Dorsolateral prefrontal cortex (tissue), 120 donors: ENCODE measurements at regions of chr10 and their contacts with region 1.

Region 1: GRCh38 chr10:23438550-23439441 is at the start of gene OTUD1:
- DNase-seq: peak; percentile 93 to 98 (median 95)
- H3K4me3 ChIP-seq: peak within 1 kb of the TSS; percentile 64 to 97 (median 83)
- H3K27ac ChIP-seq: peak within 1 kb of the TSS; percentile 77 to 99 (median 97)
- H3K27me3 ChIP-seq: no peaks in the 10 kb centered on the region
- CTCF ChIP-seq: peak in 39 of 56 donors; percentile 10 to 60 (median 26)
- total RNA-seq, gene OTUD1: 10.0 to 23.3 (median 14.7) TPM

Region 2: DNA sequence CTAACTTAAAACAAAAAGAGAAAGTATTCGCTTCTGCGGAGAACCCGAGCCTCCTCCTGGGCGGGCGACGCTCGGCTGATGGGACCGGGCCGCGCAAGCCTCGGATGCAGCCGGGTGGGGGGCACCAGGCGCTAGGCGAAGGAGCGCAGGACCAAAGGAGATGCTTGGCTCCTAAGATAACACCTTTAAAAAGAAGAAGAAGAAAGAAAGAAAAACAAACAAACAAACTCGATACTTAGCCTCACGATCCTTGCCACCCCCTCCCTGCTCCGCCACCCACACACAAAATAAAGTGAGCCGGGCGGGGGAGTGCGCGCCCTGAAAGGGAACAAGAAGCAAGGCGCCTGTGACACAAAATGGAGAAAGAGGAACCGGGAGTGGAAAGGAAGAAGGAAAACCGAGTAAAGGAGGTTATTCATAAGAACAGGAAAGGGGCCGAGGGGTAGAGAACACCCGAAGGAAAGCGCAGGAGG is 1187.0 kb before region 1 on chr10:
- intact Hi-C with region 1: loop called in 1 of 2 experiments (anchors 5 kb)
- DNase-seq: peak; percentile 28 to 68 (median 64)
- H3K4me3 ChIP-seq: peak overlapping the region; percentile 56 to 96 (median 81)
- H3K27ac ChIP-seq: peak overlapping the region; percentile 97 to 100 (median 99)
- H3K27me3 ChIP-seq: no peaks in the 10 kb centered on the region
- CTCF ChIP-seq: peak in 1 of 56 donors; percentile 11

Region 3: DNA sequence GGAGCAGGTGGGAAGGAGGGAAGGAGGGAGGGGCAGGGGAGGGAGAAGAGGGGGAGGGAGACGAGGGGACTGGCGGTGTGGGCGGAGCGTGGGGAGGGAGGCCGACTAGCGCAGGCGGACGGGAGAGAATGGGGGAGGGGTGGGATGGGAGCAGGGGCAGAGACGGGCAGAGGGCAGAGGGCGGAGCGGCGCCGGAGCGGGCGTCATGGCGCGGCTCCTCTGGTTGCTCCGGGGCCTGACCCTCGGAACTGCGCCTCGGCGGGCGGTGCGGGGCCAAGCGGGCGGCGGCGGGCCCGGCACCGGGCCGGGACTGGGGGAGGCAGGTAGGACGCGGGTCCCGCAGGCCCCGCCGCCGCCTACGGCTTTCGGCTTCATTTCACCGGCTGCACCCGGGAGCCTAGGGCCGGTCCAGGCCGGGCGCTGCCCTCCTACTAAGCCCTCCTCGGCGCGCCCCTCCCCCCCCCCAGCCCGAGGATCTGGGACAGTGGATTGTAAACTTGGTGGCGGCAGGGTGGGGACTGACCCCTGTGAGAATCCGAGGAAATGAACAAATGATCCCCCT is 343.3 kb before region 1 on chr10 and contains the start of gene MSRB2:
- intact Hi-C with region 1: loop called in 1 of 2 experiments (anchors 10 kb)
- DNase-seq: peak; percentile 74 to 93 (median 85)
- H3K4me3 ChIP-seq: peak within 1 kb of the TSS; percentile 64 to 95 (median 82)
- H3K27ac ChIP-seq: peak within 1 kb of the TSS; percentile 49 to 99 (median 93)
- H3K27me3 ChIP-seq: no peaks in the 10 kb centered on the region
- CTCF ChIP-seq: peak in 6 of 56 donors; percentile 6 to 33 (median 14)
- total RNA-seq, gene MSRB2: 18.8 to 48.7 (median 33.9) TPM

Region 4: DNA sequence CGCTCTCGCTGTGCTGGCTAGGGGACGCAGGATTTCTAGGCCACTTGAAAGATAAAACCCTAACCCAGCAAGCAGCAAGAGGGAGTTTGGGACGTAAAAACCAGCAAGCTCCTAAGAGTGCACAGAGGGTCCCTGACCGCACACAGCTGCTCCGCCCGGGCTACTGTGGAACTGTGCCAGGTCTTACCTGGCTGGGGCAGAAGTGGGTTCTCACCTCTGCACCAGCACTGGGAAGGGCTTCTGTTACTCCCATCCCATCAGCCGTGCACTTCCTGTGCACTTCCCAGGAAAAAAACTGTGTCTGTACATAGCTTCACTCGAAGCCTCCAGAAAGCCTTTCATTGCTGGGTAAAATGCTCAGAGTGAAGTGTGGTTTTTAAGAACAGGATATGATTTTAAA is 292.5 kb before region 1 on chr10:
- intact Hi-C with region 1: no loop called
- DNase-seq: no peak
- H3K4me3 ChIP-seq: no peak overlapping the region
- H3K27ac ChIP-seq: no peak overlapping the region
- H3K27me3 ChIP-seq: no peaks in the 10 kb centered on the region
- CTCF ChIP-seq: no peak

Region 5: DNA sequence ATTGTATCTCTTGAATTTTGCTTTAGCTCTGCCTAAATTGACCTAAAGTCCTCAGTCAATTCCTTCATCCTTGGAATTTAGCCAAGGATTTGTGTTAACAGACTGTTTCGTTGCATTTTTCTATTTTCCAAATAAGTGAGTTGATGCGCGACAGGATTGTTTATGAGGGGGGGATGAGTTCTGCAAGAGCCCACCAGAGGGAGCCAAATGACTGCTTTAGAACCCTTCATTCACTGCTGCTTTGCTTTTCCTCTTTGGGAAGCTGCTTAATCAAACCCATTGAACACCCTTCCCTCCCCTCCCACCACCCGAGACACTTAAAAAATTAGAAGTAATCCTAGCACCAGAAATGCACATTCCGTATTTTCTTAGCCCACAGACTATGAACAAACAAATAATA is 280.4 kb before region 1 on chr10:
- intact Hi-C with region 1: loop called in 1 of 2 experiments (anchors 10 kb)
- DNase-seq: peak in 6 of 10 donors; percentile 27 to 72 (median 55)
- H3K4me3 ChIP-seq: peak overlapping the region; percentile 7 to 72 (median 48)
- H3K27ac ChIP-seq: no peak overlapping the region
- H3K27me3 ChIP-seq: no peaks in the 10 kb centered on the region
- CTCF ChIP-seq: peak; percentile 62 to 97 (median 87)

Region 6: DNA sequence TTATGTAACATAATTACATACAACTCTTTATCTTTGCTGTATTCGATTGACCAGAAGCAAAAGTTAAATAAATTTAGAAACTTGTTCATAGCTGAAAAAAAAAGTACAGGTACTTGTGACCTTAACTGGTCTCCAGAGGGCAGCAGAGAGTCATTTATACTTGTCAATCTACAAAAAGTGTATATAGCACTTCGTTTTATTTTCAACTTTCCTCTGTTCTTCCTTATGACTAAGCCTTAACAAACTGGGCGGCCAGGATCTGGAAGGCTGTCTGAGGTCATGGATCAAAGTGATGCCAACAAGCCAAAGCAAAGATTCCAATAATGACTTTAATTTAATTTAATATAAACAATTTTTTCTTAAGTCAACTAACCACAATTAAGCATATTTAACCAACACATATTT is 124.0 kb before region 1 on chr10:
- intact Hi-C with region 1: loop called in 1 of 2 experiments (anchors 10 kb)
- DNase-seq: peak in 3 of 10 donors; percentile 25 to 39 (median 28)
- H3K4me3 ChIP-seq: no peak overlapping the region
- H3K27ac ChIP-seq: no peak overlapping the region
- H3K27me3 ChIP-seq: no peaks in the 10 kb centered on the region
- CTCF ChIP-seq: peak; percentile 69 to 98 (median 85)

Region 7: GRCh38 chr10:23344241-23344841 is 94.5 kb before region 1 on chr10 and contains the start of gene C10orf67:
- intact Hi-C with region 1: loop called (anchors 2 kb)
- DNase-seq: peak; percentile 9 to 70 (median 51)
- H3K4me3 ChIP-seq: peak within 1 kb of the TSS; percentile 44 to 96 (median 75)
- H3K27ac ChIP-seq: peak within 1 kb of the TSS in 57 of 59 donors; percentile 16 to 92 (median 80)
- H3K27me3 ChIP-seq: no peaks in the 10 kb centered on the region
- CTCF ChIP-seq: no peak
- total RNA-seq, gene C10orf67: 0.26 to 2.7 (median 1.2) TPM in 119 of 120 experiments, not detected in the other

Region 8: DNA sequence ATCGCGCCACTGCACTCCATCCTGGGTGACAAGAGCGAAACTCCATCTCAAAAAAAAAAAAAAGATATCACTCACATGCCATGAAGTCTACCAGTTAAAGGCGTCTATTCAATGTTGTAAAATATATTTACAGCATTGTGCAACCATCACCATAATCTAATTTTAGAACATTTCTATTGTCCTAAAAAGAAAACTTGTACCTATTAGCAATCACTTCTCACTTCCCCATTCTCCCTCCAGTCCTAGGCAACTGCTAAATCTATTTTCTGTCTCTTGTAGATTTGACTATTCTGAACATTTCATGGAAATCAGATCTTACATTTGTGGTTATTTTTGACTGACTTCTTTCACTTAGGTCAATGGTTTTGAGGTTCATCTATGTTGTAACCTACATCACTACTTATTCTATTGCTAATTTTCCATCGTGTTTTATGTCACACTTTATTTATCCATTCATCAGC is 25.1 kb before region 1 on chr10:
- intact Hi-C with region 1: no loop called
- DNase-seq: no peak
- H3K4me3 ChIP-seq: no peak overlapping the region
- H3K27ac ChIP-seq: no peak overlapping the region
- H3K27me3 ChIP-seq: no peaks in the 10 kb centered on the region
- CTCF ChIP-seq: no peak

Region 9: DNA sequence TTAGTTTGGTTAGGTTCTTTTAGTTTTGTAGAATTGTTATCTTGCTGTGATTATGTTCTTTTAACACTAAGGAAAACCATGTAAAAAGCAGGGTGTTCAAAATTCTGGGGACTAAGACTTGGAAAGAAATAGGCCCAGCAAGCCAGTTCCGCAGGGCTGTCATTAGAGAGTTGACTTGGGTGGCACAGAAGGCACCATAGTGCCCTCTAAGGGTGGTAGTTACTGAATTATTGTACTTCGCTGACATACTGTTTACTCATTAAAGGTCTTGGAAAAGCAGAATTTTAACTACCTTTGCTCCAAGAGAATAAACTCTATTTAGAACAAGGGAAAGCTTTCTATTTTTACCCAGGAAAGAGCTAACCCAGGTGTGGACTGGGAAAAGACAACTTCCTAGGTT is 86.6 kb after region 1 on chr10:
- intact Hi-C with region 1: loop called in 1 of 2 experiments (anchors 5 kb)
- DNase-seq: no peak
- H3K4me3 ChIP-seq: no peak overlapping the region
- H3K27ac ChIP-seq: no peak overlapping the region
- H3K27me3 ChIP-seq: peaks cover 0 to 4% (median 0%) of the 10 kb centered on the region in 45 donors
- CTCF ChIP-seq: peak in 55 of 56 donors; percentile 16 to 80 (median 53)